Lower leg skin (tissue), 4 donors: ENCODE measurements at regions of chr9 and their contacts with region 1.

Region 1: GRCh38 chr9:130866474-130866965 is 30.1 kb downstream of the QRFP start:
- DNase-seq: peak in 1 of 2 donors; percentile 45
- H3K4me3 ChIP-seq: no peak overlapping the region
- CTCF ChIP-seq: peak in 1 of 3 donors; percentile 29
- POLR2A ChIP-seq: no peak

Region 2: GRCh38 chr9:130768265-130768664 is 98.3 kb before region 1 on chr9:
- intact Hi-C with region 1: loop called (anchors 10 kb)
- DNase-seq: no peak
- H3K4me3 ChIP-seq: no peak overlapping the region
- CTCF ChIP-seq: no peak
- POLR2A ChIP-seq: no peak

Region 3: DNA sequence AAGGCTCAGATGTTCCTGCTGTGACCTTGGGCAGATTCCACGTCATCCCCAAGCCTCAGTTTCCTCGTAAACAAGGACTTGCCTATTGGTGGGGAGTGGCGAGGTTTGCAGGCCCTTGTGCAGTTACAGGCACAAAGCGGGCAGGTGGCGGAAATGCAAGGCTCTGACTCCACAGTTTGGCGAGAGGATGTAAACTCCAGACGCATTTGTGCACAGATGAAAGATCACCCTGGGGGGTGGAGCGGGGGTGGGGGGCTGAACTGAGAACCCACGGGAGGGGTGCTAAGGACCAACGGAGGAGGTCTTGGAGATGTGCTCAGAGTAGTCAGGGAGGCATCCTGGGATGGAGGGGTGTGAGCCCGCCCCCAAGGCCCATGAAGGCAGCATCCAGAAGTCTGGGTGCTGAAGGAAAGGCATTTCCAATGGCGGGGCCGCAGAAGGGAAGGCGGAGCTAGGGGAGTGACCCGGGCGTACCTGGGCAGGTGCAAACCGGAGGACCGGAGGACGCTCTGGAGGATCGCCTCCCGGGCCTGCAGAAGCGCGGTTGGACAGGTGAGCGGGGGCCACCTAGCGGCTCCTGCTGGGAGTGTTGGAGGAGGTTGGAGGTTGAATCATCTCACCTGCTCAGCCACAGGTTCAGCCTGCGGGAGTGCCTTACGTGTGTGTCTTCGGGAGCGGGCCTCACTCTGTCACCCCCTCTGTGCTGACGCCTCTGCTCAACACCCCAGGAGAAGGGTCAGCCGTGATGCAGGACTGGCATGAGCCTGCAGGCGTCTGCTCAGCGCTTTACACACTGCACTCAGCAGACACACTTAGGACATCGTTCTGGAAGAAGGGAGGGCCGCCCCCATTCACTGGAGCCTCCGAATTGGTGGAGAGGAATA is 74.4 kb after region 1 on chr9:
- intact Hi-C with region 1: loop called (anchors 10 kb)
- DNase-seq: peak; percentile 55 to 93
- H3K4me3 ChIP-seq: no peak overlapping the region
- CTCF ChIP-seq: peak in 1 of 3 donors; percentile 35
- POLR2A ChIP-seq: no peak